ENCODE measurements at regions of chr1 and their contacts with region 1.

Region 1: DNA sequence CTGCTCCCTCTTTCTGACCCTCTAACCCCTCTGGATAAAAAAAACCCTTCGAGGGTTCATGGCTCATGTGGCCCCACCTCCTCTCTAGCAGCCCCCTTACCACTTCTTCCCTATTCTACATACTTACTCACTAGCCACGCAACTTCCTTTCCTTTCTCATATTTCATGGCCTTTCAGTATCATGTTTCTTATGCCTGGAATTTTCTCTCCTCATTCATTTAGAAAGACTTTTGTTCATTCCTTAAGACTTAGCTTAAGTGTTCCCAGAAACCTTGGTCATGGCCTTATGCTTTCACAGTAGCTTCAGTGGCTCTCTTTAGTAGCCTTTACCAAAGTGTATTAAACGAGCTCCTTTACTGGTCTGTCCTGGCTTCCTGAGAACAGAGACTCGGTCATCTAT is 6.1 kb downstream of the ACP6 start:
- DNase-seq: no peak
- H3K4me3 Mint-ChIP-seq: peak overlapping the region; percentile 1
- H3K27ac Mint-ChIP-seq: peak overlapping the region; percentile 17
- H3K4me1 Mint-ChIP-seq: peaks cover 86% of the 10 kb centered on the region
- H3K27me3 Mint-ChIP-seq: no peaks in the 10 kb centered on the region
- CTCF ChIP-seq: no peak

Region 2: GRCh38 chr1:147611021-147611426 is 53.2 kb before region 1 on chr1:
- CTCF ChIA-PET with region 1: no interaction called
- intact Hi-C with region 1: no loop called
- DNase-seq: no peak
- H3K4me3 Mint-ChIP-seq: no peak overlapping the region
- H3K27ac Mint-ChIP-seq: no peak overlapping the region
- H3K4me1 Mint-ChIP-seq: peaks cover 10% of the 10 kb centered on the region
- H3K27me3 Mint-ChIP-seq: no peaks in the 10 kb centered on the region
- CTCF ChIP-seq: no peak

Region 3: DNA sequence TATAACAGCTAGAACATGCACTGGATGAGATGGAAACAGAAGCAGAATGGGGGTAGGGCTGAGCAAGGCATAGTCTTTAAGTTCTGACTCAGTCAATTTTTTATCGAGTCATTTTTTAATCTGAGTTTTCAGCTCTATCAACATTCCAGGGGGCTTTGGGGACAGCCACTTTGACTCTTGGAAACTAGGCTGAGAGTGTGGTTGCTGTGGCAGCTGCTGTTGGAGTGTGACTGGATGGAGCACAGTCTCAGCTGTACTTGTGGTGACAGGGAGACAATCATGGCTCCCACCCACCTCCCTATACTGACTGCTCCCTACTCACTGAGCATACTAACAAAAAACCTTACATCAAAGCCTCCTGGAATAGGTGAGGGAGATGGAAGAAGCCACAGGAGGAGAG is 71.2 kb after region 1 on chr1:
- CTCF ChIA-PET with region 1: no interaction called
- intact Hi-C with region 1: no loop called
- DNase-seq: no peak
- H3K4me3 Mint-ChIP-seq: no peak overlapping the region
- H3K27ac Mint-ChIP-seq: no peak overlapping the region
- H3K4me1 Mint-ChIP-seq: no peaks in the 10 kb centered on the region
- H3K27me3 Mint-ChIP-seq: no peaks in the 10 kb centered on the region
- CTCF ChIP-seq: no peak

Region 4: DNA sequence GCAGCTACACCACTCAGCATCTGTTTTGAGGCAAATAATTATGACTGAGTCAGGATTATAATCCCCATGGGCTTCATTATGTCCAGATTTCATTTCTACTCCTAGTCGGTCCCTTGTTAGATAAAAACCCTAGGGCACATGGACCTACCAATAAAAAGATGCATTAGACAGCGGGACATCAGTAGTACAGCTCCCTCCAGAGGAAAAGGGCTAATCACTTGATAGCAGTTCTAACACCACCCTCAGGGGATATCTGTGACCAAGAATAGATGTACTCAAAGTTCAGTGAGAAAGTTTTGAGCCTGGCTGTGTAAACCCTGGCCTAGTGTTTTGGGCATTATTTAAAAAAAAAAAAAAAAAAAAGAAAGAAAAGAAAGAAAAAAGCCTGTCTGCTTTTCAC is 248.3 kb after region 1 on chr1:
- CTCF ChIA-PET with region 1: no interaction called
- intact Hi-C with region 1: loop called (anchors 5 kb)
- DNase-seq: no peak
- H3K4me3 Mint-ChIP-seq: no peak overlapping the region
- H3K27ac Mint-ChIP-seq: no peak overlapping the region
- H3K4me1 Mint-ChIP-seq: no peaks in the 10 kb centered on the region
- H3K27me3 Mint-ChIP-seq: peaks cover 54% of the 10 kb centered on the region
- CTCF ChIP-seq: no peak

Measured in Calu3 (cell line).